HepG2 (cell line): ENCODE measurements at regions of chr1 and their contacts with region 1.

Region 1: GRCh38 chr1:15803354-15803753 is 4.1 kb downstream of the UQCRHL start:
- DNase-seq: peak; percentile 48
- ATAC-seq: no peak
- H3K4me3 ChIP-seq: no peak overlapping the region
- H3K27ac ChIP-seq: no peak overlapping the region
- H3K4me1 ChIP-seq: peaks cover 64% of the 10 kb centered on the region
- H3K27me3 ChIP-seq: no peaks in the 10 kb centered on the region
- CTCF ChIP-seq: peak; percentile 70
- EP300 ChIP-seq: no peak
- POLR2A ChIP-seq: no peak
- RAD21 ChIP-seq: peak; percentile 62

Region 2: DNA sequence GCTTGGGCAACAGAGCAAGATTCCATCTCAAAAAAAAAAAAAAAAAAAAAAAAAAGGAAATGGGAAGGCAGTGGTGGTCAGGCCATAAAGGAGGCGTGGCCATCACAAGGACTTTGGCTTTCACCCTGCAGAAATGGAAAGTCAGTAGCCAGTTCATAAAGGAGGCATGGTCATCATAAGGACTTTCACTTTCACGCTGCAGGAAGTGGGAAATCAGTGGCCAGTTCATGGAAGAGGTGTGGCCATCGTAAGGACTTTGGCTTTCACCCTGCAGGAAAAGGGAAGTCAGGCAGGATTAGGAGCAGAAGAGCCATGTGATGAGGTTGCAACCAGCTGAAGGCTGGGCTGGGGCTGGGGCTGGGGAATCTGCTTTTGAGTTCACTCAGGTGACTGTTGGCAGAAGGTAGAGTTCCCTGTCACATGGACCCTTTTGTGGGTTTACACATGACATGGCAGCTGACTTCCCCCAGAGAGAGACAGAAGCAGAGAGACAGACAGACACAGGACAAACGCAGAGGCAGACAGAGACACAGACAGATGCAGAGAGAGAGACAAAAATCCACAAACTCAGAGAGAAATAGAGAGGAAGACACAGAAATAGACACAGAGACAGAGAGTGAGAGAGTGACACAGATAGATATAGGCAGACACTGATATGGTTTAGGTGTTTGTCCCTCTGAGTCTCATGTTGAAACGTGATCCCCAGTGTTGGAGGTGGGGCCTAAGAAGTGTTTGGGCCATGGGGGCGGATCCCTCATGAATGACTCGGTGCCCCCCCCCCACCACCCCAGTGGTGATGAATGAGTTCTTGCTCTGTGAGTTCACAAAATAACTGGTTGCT is 1468.8 kb before region 1 on chr1:
- CTCF ChIA-PET with region 1: no interaction called
- POLR2A ChIA-PET with region 1: no interaction called
- in situ Hi-C with region 1: no loop called
- intact Hi-C with region 1: no loop called
- DNase-seq: no peak
- ATAC-seq: no peak; the same call in 2 of the 3 replicates
- H3K4me3 ChIP-seq: no peak overlapping the region
- H3K27ac ChIP-seq: no peak overlapping the region
- H3K4me1 ChIP-seq: no peaks in the 10 kb centered on the region
- H3K27me3 ChIP-seq: no peaks in the 10 kb centered on the region; a peak in 1 of 5 replicates
- CTCF ChIP-seq: no peak
- EP300 ChIP-seq: no peak
- POLR2A ChIP-seq: no peak
- RAD21 ChIP-seq: no peak

Region 3: GRCh38 chr1:15835741-15836510 is 32.6 kb after region 1 on chr1:
- CTCF ChIA-PET with region 1: no interaction called
- POLR2A ChIA-PET with region 1: interaction called, 14 read pairs
- in situ Hi-C with region 1: no loop called
- intact Hi-C with region 1: no loop called
- DNase-seq: peak; percentile 98
- ATAC-seq: peak; percentile 55
- H3K4me3 ChIP-seq: peak overlapping the region; percentile 77 to 83 (median 78); a peak in 5 of 6 replicates
- H3K27ac ChIP-seq: peak overlapping the region; percentile 100
- H3K4me1 ChIP-seq: peaks cover 42% of the 10 kb centered on the region
- H3K27me3 ChIP-seq: no peaks in the 10 kb centered on the region; a peak in 1 of 5 replicates
- CTCF ChIP-seq: no peak
- EP300 ChIP-seq: peak in 1 of 2 experiments; percentile 61; a peak in 2 of 4 replicates
- POLR2A ChIP-seq: peak; percentile 82 to 84
- RAD21 ChIP-seq: 0 out of 2 replicates have a peak, but pooled peaks have one; percentile 18

Region 4: GRCh38 chr1:15923241-15923640 is 119.9 kb after region 1 on chr1:
- CTCF ChIA-PET with region 1: no interaction called
- POLR2A ChIA-PET with region 1: no interaction called
- in situ Hi-C with region 1: no loop called
- intact Hi-C with region 1: loop called (anchors 5 kb)
- DNase-seq: no peak
- ATAC-seq: no peak
- H3K4me3 ChIP-seq: no peak overlapping the region
- H3K27ac ChIP-seq: no peak overlapping the region
- H3K4me1 ChIP-seq: no peaks in the 10 kb centered on the region
- H3K27me3 ChIP-seq: no peaks in the 10 kb centered on the region
- CTCF ChIP-seq: no peak
- EP300 ChIP-seq: no peak
- POLR2A ChIP-seq: no peak
- RAD21 ChIP-seq: no peak